ENCODE measurements at regions of chr17 and their contacts with region 1.

Region 1: DNA sequence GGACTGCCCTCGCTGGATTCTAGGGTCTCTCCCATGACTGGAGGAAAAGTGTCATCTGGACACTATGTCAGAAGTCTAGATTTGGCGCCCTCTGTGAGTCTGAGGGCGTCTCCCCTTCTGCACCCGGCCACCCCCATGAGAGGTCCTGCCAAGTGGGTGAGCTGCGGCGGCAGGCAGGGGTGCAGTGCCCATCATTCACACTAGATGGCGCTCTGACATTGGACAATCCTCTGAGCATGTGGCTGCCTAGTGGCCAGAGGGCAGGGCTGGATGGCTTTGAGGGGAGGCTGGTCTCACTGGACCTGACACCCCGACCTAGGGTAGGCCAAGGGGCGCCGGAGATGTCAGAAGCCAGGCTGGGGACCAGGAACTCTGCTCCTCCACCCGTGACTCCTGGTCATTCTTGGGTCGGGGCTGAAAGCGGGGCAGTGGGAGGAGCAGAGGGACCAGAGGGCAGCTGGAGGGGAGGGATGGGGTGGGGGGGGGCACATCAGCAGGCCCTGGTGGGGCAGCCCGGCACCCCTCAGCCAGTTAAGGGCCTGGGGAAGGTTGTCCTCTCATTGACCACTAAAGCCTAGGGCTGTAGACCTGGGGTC is 28.0 kb downstream of the MRM1 start:
- DNase-seq: peak; percentile 51 to 83 (median 79)
- H3K4me3 ChIP-seq: no peak overlapping the region
- H3K27ac ChIP-seq: no peak overlapping the region
- H3K4me1 ChIP-seq: no peaks in the 10 kb centered on the region
- H3K27me3 ChIP-seq: no peaks in the 10 kb centered on the region
- CTCF ChIP-seq: peak; percentile 82 to 87 (median 84)
- EP300 ChIP-seq: no peak
- POLR2A ChIP-seq: no peak

Region 2: DNA sequence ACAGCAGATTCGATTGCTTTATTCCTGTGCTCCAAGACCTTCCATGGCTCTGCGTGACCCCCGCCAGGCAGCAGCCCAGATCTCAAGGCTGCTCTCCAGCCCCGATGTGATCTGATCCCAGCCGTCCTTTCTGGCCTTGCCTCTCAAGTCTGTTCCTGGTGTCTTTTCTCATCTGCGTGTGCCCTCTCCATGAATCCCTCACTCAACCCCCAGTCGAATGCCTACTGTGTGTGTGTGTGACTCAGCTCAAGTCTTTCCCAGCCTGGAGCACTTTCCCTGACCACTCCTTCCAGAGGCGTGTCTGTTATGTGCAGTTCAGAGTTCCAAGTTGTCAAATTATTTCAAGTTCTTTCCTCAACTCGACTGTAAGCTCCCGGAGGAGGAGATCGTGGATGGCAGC is 36.1 kb after region 1 on chr17:
- intact Hi-C with region 1: no loop called
- DNase-seq: no peak
- H3K4me3 ChIP-seq: no peak overlapping the region
- H3K27ac ChIP-seq: no peak overlapping the region
- H3K4me1 ChIP-seq: no peaks in the 10 kb centered on the region
- H3K27me3 ChIP-seq: no peaks in the 10 kb centered on the region
- CTCF ChIP-seq: no peak
- EP300 ChIP-seq: no peak
- POLR2A ChIP-seq: no peak

Region 3: DNA sequence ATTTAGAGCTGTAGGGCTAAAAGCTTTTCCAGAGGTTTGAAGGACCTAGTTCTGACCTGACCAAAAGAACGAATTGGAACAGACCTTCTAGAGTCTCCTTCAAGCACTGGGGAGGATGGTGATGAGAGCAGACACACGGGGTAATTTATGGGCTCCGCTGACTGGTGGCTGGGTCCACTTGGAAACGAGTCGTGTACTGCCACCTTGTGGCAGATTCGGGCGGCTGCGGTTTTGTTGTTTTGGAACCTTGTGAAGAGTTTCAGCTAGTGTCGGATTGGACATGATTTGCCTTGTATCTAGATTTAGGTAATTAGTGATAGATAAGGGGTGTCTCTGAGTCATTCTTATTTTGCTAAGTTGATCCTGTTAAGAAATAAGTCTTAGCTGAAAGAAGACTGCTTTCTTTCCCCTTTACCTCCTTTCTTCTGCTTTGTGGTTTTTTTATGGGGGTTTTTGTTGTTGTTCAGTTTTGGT is 418.3 kb after region 1 on chr17:
- intact Hi-C with region 1: loop called (anchors 5 to 10 kb)
- DNase-seq: peak; percentile 64 to 81 (median 77)
- H3K4me3 ChIP-seq: no peak overlapping the region
- H3K27ac ChIP-seq: no peak overlapping the region
- H3K4me1 ChIP-seq: no peaks in the 10 kb centered on the region
- H3K27me3 ChIP-seq: no peaks in the 10 kb centered on the region
- CTCF ChIP-seq: peak; percentile 52 to 76 (median 56)
- EP300 ChIP-seq: no peak
- POLR2A ChIP-seq: no peak

Region 4: DNA sequence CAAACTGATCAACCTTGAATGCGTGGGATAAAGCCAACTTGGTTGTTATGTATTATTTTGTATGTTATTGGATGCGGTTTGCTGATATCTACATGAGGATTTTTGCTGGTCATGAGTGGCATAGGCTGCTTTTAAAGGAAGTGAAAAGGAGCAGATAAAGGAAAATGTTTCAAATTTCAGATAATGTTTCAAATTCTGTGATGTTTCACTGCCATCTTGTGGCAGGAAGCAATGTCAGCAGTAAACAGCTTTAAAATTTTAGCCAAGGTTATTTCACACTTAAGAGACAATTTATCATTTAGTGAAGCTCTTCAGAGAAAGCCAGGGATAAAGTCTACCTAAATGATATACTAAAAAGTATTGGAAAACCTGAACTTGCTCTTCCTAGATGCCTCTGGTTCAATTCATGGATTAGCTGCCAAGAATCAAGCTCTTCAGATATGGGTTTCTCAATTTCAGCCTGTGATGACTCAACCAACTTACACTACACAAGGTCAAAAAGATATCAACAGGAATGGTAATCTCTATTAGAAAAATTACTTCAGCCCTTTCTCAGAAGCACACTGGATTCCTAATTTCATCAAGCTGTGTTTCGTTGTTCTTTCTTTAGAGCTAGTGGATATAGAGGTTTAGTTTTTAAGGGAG is 610.5 kb after region 1 on chr17:
- intact Hi-C with region 1: loop called in 2 of 4 experiments (anchors 10 kb)
- DNase-seq: no peak
- H3K4me3 ChIP-seq: no peak overlapping the region
- H3K27ac ChIP-seq: no peak overlapping the region
- H3K4me1 ChIP-seq: peaks cover 2% of the 10 kb centered on the region
- H3K27me3 ChIP-seq: no peaks in the 10 kb centered on the region
- CTCF ChIP-seq: peak; percentile 48 to 65 (median 57)
- EP300 ChIP-seq: no peak
- POLR2A ChIP-seq: no peak